ENCODE measurements at regions of chr12 and their contacts with region 1.

Region 1: GRCh38 chr12:100077367-100077766 is 65.3 kb downstream of the BLTP3B start:
- DNase-seq: no peak

Region 2: DNA sequence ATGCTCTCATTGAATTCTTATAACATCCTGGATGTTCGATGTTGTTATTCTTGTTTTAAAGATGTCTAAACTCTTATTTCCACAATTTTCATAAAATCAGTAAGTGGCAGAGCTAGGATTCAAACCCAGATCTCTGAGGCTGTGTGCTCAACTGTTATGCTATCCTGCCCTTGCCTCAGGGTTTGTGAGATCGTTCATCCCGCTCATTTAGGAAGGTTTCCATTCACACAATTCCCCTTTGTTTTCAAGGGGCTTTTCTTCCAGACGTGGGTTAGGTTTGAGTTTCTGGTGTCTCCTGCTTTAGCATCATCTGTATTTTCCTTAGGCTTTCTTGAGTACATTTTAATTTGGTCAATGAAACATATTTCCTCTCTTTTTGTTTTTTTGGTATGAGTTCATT is 1362.9 kb before region 1 on chr12:
- intact Hi-C with region 1: no loop called
- DNase-seq: no peak

Region 3: DNA sequence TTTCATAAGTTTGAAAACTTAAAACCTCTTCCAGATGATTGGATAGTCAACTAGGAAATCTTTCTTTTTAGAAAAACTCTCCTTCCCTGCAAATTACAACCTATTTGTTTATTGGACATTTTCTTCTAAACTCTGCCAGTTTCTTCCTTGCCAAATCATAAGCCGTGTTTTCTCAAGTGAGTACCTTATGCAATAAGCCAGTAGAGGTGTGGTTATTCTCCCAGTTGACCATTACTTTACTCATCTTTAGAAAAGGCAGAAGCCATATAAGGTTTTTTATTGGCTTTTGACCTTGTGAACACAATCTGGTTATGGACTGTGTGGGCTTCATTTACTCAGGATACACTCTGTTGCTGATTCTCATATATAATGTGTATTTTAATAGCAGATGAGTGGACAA is 137.8 kb after region 1 on chr12:
- intact Hi-C with region 1: loop called in 1 of 2 experiments (anchors 10 kb)
- DNase-seq: no peak

Measured in posterior vena cava (tissue), 2 donors.